ENCODE measurements at regions of chr17 and their contacts with region 1.

Region 1: GRCh38 chr17:50853015-50853615 is 13.0 kb downstream of the TOB1 start:
- DNase-seq: no peak
- H3K27ac ChIP-seq: no peak overlapping the region
- CTCF ChIP-seq: no peak

Region 2: DNA sequence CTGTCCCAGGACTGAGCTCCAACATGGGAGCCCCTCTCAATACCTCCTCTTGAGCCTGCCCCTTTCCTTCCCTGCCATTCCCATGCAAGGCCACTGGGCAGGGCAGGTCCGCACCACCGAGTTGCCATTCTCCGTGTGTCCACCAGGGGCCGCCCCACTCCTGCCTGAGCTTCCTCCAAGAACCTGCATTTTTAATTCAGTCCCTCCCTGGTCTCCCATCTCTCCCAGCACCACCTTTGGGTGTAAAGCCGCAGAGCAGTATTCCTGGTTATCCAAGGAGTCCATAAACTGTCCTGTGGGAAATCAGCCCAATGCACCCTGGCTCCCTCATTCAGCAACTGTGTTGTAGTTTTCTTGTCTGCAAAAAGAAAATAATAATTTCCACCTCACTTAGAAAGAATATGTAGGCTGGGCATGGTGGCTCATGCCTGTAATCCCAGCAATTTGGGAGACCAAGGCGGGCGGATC is 69.9 kb before region 1 on chr17:
- CTCF ChIA-PET with region 1: interaction called, 26 read pairs
- POLR2A ChIA-PET with region 1: no interaction called
- DNase-seq: peak; percentile 92
- H3K27ac ChIP-seq: peak overlapping the region; percentile 8; the same call in 1 of the 2 replicates
- CTCF ChIP-seq: peak; percentile 99

Region 3: DNA sequence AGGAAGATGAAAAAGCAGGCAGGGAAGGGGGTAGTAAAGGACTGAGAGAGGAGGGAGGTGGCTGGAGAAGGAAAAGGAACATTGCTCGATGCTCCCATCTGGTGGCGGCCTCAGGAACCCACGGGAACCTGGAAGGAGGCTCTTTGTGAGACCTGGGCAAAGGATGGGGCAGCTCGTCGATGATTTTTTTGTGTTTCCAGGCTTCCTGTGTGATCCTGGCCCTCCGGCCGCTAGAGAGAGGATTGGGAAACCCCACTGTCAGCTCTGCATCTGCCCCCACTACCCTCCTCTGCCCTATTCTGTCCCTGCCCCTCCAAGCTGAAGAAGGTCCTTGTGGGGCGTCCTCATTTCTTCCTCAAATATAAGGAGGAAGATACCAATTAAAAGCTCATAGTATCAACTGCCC is 11.2 kb before region 1 on chr17:
- CTCF ChIA-PET with region 1: interaction called, 16 read pairs
- POLR2A ChIA-PET with region 1: no interaction called
- DNase-seq: peak; percentile 79
- H3K27ac ChIP-seq: no peak overlapping the region
- CTCF ChIP-seq: peak; percentile 82

Region 4: GRCh38 chr17:50949989-50950881 is 97.1 kb after region 1 on chr17:
- CTCF ChIA-PET with region 1: interaction called, 54 read pairs
- POLR2A ChIA-PET with region 1: no interaction called
- DNase-seq: peak; percentile 95
- H3K27ac ChIP-seq: peak overlapping the region; percentile 94
- CTCF ChIP-seq: peak; percentile 84

Measured in RWPE1 (cell line).